Common myeloid progenitor, CD34-positive (primary cell): ENCODE measurements at regions of chr2 and their contacts with region 1.

Region 1: DNA sequence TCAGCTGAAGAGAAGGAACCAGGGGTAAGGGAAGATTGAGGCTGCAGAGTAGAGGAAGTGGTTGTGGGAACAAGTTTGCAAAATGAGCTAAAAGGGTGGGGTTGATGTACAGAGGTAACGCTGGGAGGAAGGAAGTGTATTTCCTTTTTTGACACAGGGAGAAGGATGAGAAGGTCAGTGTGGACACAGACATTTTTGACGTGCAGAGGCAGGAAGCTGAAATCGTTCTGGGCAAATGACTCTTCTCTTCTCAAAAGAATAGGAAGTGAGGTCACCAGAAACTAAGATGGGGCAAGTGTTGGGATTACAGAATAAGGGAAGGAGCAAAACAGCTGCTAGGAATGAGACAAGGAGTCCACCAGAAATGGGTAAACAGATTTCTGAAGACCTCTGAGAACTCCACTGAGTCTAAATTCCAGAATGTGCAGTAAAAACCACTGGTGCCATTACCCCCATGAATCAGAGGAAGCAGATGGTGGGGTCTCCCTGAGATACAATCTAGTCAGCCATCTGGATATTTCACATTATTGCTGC is 20.0 kb upstream of the RNF149 start:
- DNase-seq: peak; percentile 87 to 98 (median 96)
- H3K4me3 ChIP-seq: peak overlapping the region in 4 of 7 experiments; percentile 1 to 63 (median 36)
- H3K27ac ChIP-seq: peak overlapping the region; percentile 9 to 72
- H3K4me1 ChIP-seq: peaks cover 34 to 47% (median 37%) of the 10 kb centered on the region in 4 experiments
- H3K27me3 ChIP-seq: no peaks in the 10 kb centered on the region

Region 2: GRCh38 chr2:101282980-101283379 is 45.6 kb before region 1 on chr2:
- CTCF ChIA-PET with region 1: no interaction called
- POLR2A ChIA-PET with region 1: no interaction called
- DNase-seq: no peak
- H3K4me3 ChIP-seq: no peak overlapping the region
- H3K27ac ChIP-seq: no peak overlapping the region
- H3K4me1 ChIP-seq: no peaks in the 10 kb centered on the region
- H3K27me3 ChIP-seq: no peaks in the 10 kb centered on the region

Region 3: DNA sequence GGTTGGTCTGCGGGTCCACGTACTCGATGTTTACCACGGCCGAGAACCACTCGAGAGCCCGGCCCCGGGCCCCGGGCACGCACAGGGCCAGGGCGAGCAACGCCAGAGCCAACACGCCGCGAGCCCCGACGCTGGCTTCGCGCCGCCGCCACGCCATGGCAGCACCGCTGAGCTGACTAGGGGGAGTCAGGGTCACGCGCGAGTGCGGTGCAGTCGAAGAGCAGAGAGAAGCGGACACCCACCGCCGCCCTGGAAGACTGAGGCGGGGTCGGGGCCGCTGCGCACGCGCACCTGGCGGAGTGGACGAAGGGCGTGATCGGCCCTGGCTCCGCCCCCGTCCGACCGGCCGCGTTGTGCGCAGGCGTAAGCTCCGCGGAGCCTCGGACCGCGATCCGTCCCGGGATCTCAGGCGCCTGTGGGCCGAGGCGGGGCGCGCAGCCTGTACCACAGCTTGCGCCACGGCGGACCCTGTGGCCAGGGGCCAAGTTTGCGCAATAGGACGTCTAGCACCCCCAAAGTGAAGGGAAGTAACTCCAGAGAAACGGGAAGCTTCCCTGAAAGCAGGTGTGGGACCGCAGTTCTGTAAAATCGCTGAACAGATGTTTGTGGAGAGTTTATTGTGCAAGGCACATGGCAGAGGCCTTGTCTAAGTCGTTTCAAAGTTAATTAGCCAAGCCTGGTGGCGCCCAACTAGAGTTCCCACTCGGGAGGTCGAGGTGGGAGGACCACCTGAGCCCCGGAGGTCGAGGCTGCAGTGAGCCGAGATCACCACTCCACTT is 19.9 kb before region 1 on chr2 and contains the start of gene RNF149:
- CTCF ChIA-PET with region 1: interaction called, 11 read pairs
- POLR2A ChIA-PET with region 1: interaction called, 14 read pairs
- DNase-seq: peak; percentile 95 to 99 (median 99)
- H3K4me3 ChIP-seq: peak within 1 kb of the TSS; percentile 58 to 91 (median 82)
- H3K27ac ChIP-seq: peak within 1 kb of the TSS; percentile 67 to 86
- H3K4me1 ChIP-seq: peaks cover 27 to 71% (median 56%) of the 10 kb centered on the region in 4 experiments
- H3K27me3 ChIP-seq: no peaks in the 10 kb centered on the region

Region 4: DNA sequence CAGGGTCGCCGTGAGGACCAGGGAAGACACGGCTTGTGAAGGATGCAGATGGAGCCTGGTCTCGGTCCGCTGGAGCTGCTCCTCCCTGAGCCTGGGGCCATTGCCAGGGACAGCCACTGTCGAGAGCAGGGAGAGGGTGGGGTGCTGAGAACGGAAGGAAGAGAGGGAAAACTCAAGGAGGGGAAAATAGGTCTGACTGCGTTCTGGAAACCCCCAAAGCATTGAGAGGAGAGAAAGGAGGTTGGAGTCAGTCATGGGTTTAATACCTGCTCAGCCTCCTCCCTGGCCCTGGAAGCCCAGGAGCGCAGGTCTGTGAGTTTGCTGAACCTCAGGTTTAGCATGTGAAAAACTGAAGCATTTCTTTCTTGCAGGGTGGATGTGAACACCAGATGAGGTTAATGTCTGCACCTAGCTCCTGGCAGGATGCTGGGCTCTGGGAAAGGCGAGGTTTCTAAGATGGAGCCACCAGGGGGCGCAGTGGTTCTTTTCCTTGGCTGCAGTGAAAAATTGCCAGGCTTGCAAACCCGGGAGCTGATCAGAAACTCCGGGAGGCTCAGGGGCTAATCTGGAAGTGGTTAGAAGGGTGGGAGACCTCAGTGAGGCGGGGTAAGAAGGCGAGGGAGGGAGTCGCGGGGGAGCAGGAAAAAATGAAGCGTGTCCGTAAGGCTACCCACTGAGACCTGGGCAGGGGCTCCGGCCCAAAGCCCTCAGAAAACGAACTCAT is 13.5 kb after region 1 on chr2:
- CTCF ChIA-PET with region 1: interaction called, 29 read pairs
- POLR2A ChIA-PET with region 1: interaction called, 3 read pairs
- DNase-seq: peak; percentile 57 to 70 (median 58)
- H3K4me3 ChIP-seq: no peak overlapping the region
- H3K27ac ChIP-seq: no peak overlapping the region
- H3K4me1 ChIP-seq: peaks cover 0 to 20% (median 10%) of the 10 kb centered on the region in 4 experiments
- H3K27me3 ChIP-seq: no peaks in the 10 kb centered on the region